ENCODE measurements at regions of chr15 and their contacts with region 1.

Region 1: GRCh38 chr15:51341366-51342226 is at the start of gene GLDN:
- DNase-seq: no peak
- H3K4me3 ChIP-seq: peak within 1 kb of the TSS in 3 of 4 donors; percentile 9 to 55 (median 30)
- H3K27ac ChIP-seq: no peak within 1 kb of the TSS
- H3K4me1 ChIP-seq: peaks cover 0 to 17% (median 11%) of the 10 kb centered on the region in 4 donors
- H3K27me3 ChIP-seq: peaks cover 48% of the 10 kb centered on the region
- CTCF ChIP-seq: no peak
- EP300 ChIP-seq: no peak
- POLR2A ChIP-seq: no peak
- total RNA-seq, gene GLDN: 0.48 to 3.7 (median 2.6) TPM in 3 of 4 donors, not detected in the other

Region 2: GRCh38 chr15:51360741-51361140 is 19.1 kb after region 1 on chr15:
- in situ Hi-C with region 1: no loop called
- intact Hi-C with region 1: loop called (anchors 2 kb)
- DNase-seq: no peak
- H3K4me3 ChIP-seq: no peak overlapping the region
- H3K27ac ChIP-seq: no peak overlapping the region
- H3K4me1 ChIP-seq: no peaks in the 10 kb centered on the region
- H3K27me3 ChIP-seq: no peaks in the 10 kb centered on the region
- CTCF ChIP-seq: no peak
- EP300 ChIP-seq: no peak
- POLR2A ChIP-seq: no peak

Measured in transverse colon (tissue), 4 donors.